CD8-positive, alpha-beta T cell (primary cell): ENCODE measurements at regions of chr3 and their contacts with region 1.

Region 1: DNA sequence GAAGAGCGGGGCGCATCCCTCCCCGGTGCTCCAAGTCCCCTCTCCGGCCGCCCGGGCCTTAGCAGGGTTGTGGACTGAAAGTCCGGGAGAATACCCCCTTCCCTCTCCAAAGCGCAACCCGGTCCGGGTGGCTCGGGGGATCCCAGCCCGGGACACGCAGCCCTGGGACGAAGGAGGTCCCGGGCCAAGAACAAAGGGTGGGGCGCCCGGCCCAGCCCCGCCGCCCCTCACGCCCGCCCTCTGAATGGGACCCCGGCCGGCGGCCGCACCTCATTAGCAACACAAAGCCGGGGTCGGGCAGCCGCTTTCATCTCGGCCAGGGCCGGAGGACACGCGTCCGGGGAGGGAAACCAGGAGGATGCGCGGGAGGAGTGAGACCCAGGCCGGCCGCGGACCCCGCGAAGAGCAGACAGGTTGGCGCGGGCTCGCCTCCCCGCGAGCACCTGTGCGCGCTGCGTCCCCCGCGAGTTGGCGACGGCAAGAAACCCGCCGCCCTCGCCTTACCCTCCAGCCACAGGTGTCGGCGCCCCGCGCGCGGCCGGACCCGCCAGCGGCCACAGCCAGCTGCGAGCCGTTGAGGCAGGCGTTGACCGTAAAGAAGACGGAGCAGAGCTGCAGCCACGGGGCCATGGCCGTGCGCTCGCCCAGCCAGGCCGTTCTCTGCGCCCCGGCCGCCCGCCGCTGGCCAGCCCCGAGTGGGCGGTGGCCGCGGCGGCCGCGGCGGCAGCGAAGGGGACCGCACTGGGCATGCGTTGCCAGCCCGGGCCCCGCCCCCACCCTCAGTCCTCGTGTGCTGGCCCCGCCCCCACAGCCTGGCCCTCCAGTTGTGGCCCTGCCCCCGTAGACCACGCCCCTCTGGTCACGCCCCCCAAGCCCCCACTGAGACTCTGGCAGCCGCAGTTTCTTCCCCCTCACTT is at the start of gene IL17RD:
- DNase-seq: peak in 6 of 9 experiments; percentile 16 to 77 (median 40)
- ATAC-seq: peak; percentile 55
- H3K4me3 ChIP-seq: peak within 1 kb of the TSS; percentile 14 to 20
- H3K4me3 Mint-ChIP-seq: peak within 1 kb of the TSS; percentile 83
- H3K27ac ChIP-seq: no peak within 1 kb of the TSS
- H3K27ac Mint-ChIP-seq: no peak within 1 kb of the TSS
- H3K4me1 ChIP-seq: peaks cover 10% of the 10 kb centered on the region
- H3K4me1 Mint-ChIP-seq: peaks cover 12% of the 10 kb centered on the region
- H3K27me3 ChIP-seq: peaks cover 14 to 21% of the 10 kb centered on the region in 2 experiments
- H3K27me3 Mint-ChIP-seq: peaks cover 67% of the 10 kb centered on the region
- CTCF ChIP-seq: no peak
- total RNA-seq, gene IL17RD: not detected

Region 2: DNA sequence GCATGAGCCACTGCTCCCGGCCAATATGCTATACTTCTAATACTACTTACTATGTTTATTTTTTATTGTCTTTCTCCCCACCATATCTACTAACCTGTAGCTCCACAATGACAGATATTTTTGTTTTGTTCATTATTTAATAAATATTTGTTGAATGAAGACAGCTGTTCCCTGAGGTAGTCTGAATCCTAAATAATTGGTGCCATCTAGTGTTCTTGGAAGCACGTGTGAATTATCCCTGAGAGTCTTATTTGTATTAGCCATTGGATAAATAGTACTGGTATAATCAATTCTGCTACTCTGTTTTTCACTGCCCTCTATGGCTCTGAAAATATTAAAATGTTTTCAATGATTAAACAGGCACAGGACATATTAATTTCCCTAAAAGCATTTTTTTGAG is 57.0 kb after region 1 on chr3:
- CTCF ChIA-PET with region 1: no interaction called
- POLR2A ChIA-PET with region 1: no interaction called
- intact Hi-C with region 1: loop called in 1 of 2 experiments (anchors 1 kb)
- DNase-seq: no peak
- ATAC-seq: no peak
- H3K4me3 ChIP-seq: no peak overlapping the region
- H3K4me3 Mint-ChIP-seq: no peak overlapping the region
- H3K27ac ChIP-seq: no peak overlapping the region
- H3K27ac Mint-ChIP-seq: no peak overlapping the region
- H3K4me1 ChIP-seq: no peaks in the 10 kb centered on the region
- H3K4me1 Mint-ChIP-seq: peaks cover 3% of the 10 kb centered on the region
- H3K27me3 ChIP-seq: no peaks in the 10 kb centered on the region
- H3K27me3 Mint-ChIP-seq: no peaks in the 10 kb centered on the region
- CTCF ChIP-seq: no peak